ENCODE measurements at regions of chr18 and their contacts with region 1.

Region 1: GRCh38 chr18:35121531-35121930 is 80.3 kb downstream of the MAPRE2 start:
- DNase-seq: no peak
- ATAC-seq: no peak
- H3K4me3 ChIP-seq: no peak overlapping the region
- H3K27ac ChIP-seq: no peak overlapping the region
- H3K4me1 ChIP-seq: peaks cover 3 to 25% of the 10 kb centered on the region in 2 experiments
- H3K27me3 ChIP-seq: no peaks in the 10 kb centered on the region
- CTCF ChIP-seq: no peak
- EP300 ChIP-seq: no peak
- POLR2A ChIP-seq: no peak
- RAD21 ChIP-seq: no peak

Region 2: DNA sequence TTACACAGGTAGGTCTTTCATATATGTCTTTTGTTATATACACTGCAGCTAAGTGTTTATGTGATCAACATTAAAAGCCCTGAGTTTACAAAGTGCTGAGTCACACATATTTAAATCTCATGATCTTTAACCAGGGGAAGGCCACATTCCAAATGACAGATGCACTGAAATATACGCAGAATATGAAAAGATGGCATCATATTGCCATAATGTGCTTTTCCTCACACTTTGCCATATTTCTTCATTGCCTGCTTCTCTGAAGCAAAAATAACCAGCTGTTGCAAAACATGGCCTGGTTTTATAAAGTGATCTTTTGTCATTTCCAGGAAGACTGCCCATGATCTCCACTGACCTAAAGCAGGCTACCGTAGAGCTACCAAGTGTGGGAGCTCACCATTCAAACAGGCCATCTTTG is 173.8 kb before region 1 on chr18:
- CTCF ChIA-PET with region 1: no interaction called
- POLR2A ChIA-PET with region 1: no interaction called
- in situ Hi-C with region 1: no loop called
- intact Hi-C with region 1: no loop called
- DNase-seq: peak in 1 of 4 experiments; percentile 21
- ATAC-seq: peak; percentile 77
- H3K4me3 ChIP-seq: no peak overlapping the region
- H3K27ac ChIP-seq: no peak overlapping the region
- H3K4me1 ChIP-seq: 0 out of 5 replicates have a peak, but pooled peaks cover 0 to 4% of the 10 kb centered on the region in 2 experiments
- H3K27me3 ChIP-seq: no peaks in the 10 kb centered on the region
- CTCF ChIP-seq: no peak
- EP300 ChIP-seq: no peak
- POLR2A ChIP-seq: no peak
- RAD21 ChIP-seq: no peak

Region 3: DNA sequence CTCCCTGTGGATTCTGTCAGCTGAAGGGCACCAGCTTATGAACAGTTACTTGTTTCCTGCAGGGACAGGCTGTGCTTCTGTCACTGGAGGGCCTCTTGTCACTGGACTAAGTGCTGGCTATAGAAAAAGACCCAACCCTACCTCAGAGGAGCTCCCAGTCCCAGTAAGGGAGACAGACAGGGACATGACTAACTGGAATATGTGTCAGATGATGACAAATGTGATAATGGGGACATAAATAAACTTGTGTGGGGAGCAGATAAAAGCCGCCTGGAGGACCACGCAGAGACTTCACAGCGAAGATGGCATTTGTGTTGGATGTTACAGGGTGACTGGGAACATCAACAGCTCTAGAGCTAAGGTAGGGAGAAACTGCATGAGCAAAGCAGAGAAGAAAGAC is 14.7 kb after region 1 on chr18:
- CTCF ChIA-PET with region 1: interaction called, 3 read pairs
- POLR2A ChIA-PET with region 1: interaction called, 11 read pairs
- in situ Hi-C with region 1: no loop called
- intact Hi-C with region 1: no loop called
- DNase-seq: peak; percentile 29 to 89 (median 58)
- ATAC-seq: peak; percentile 76
- H3K4me3 ChIP-seq: no peak overlapping the region
- H3K27ac ChIP-seq: peak overlapping the region; percentile 3; the same call in 2 of the 3 replicates
- H3K4me1 ChIP-seq: peaks cover 32 to 51% of the 10 kb centered on the region in 2 experiments
- H3K27me3 ChIP-seq: no peaks in the 10 kb centered on the region
- CTCF ChIP-seq: no peak
- EP300 ChIP-seq: peak; percentile 88
- POLR2A ChIP-seq: no peak
- RAD21 ChIP-seq: peak; percentile 41 to 53